K562 (cell line): ENCODE measurements at regions of chr11 and their contacts with region 1.

Region 1: DNA sequence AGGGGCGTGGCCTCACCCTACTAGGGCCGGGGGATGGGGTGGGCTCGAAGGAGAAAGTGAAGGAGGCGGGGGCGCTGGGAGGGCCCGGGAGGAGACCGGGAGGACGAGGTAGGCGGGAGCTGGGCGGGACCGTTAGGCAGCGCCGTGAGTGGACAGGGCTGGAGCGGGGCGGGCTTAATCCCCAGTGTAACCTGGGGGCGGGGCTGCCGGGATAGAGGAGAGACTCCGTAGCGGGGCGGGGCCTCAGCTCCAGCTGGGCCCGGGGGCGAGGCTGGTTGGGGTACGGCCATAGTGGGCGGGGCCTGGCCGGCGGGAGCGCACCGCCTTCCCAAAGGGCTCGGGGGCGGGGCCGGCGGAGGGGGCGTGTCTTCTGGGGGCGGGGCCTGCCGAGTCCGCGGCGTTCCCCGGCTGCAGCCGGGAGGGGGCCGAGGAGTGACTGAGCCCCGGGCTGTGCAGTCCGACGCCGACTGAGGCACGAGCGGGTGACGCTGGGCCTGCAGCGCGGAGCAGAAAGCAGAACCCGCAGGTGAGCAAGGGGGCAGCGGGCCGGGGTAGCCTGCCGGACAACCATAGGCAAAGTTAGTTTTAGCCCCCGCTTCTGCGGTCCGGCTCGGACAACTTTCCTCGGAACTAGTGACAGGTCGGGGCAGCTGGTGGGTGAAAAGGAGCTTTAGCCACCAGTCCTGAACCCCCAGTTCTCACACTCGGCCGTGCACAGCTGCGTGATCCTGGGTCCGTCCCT is at the start of gene CD82:
- DNase-seq: peak; percentile 98 to 99 (median 98)
- ATAC-seq: peak; percentile 98
- H3K4me3 ChIP-seq: peak within 1 kb of the TSS; percentile 45
- H3K27ac ChIP-seq: peak within 1 kb of the TSS; percentile 61
- H3K4me1 ChIP-seq: peaks cover 28 to 42% of the 10 kb centered on the region in 2 experiments
- H3K27me3 ChIP-seq: no peaks in the 10 kb centered on the region
- CTCF ChIP-seq: peak; percentile 14 to 46 (median 31); a peak in 3 of 6 replicates
- EP300 ChIP-seq: no peak
- POLR2A ChIP-seq: no peak; the same call in 1 of the 2 replicates
- RAD21 ChIP-seq: peak in 1 of 2 experiments; percentile 18; a peak in 1 of 4 replicates
- polyA plus RNA-seq, gene CD82: 0.27 to 0.30 TPM

Region 2: DNA sequence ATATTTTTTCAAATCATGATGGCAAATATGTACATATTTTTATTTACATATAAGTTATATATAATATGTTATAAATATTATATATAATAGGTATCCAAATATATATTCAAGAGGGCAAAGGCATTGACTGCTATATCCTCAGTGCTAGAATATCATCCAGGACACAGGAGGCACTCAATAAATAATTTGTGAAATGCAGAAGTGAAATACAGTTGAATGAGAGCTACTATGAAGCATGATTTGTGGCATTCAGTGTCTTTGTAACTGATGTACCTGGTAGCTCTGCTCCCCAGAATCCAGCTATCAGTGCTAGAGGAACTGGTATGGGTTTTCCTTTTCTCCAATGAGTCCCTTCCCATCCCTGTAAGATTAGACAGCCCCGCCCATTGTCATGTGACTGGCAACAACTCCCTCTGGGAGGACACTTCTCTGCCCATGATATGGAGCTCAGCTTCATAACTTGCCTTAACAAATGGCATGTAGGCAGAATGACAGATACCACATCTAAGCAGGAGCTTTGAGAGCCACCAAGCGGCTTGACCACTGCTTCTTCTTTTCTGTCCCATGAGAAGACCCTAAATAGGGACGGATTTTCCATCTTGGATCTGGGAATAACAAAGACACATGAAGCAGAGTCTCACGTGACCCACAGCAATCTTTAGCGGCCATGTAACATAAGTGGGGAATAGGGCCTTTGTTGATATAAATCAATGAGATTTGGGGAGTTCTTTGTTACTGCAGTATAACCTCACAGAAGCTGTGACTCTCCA is 10.2 kb before region 1 on chr11:
- CTCF ChIA-PET with region 1: no interaction called
- POLR2A ChIA-PET with region 1: no interaction called
- in situ Hi-C with region 1: no loop called
- intact Hi-C with region 1: no loop called
- DNase-seq: peak in 2 of 4 experiments; percentile 9 to 50
- ATAC-seq: peak; percentile 38
- H3K4me3 ChIP-seq: no peak overlapping the region
- H3K27ac ChIP-seq: no peak overlapping the region
- H3K4me1 ChIP-seq: peaks cover 8 to 32% of the 10 kb centered on the region in 2 experiments; a peak in 4 of 5 replicates
- H3K27me3 ChIP-seq: no peaks in the 10 kb centered on the region
- CTCF ChIP-seq: no peak
- EP300 ChIP-seq: no peak
- POLR2A ChIP-seq: no peak
- RAD21 ChIP-seq: peak in 1 of 2 experiments; percentile 11; a peak in 1 of 4 replicates

Region 3: DNA sequence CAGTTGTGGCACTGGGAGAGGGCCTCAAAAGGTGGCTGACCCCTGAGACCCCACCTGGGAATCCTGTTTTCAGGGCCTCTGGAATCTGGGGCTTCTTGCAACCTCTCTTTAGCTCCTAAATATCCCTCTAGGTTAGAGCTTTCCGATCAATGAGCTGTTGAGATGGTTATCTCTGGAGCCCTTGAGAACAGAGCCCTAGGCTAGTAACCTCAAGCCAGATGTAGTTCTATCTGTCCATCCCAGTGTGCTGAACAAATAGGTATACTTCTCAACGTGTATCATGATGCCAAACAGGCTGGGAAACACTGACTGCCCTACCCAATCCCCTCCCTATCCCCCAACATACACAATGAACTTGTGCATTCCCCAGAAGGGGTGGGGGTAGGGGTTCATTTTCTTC is 17.3 kb after region 1 on chr11:
- CTCF ChIA-PET with region 1: no interaction called
- POLR2A ChIA-PET with region 1: interaction called, 10 read pairs
- in situ Hi-C with region 1: no loop called
- intact Hi-C with region 1: no loop called
- DNase-seq: no peak
- ATAC-seq: no peak
- H3K4me3 ChIP-seq: no peak overlapping the region
- H3K27ac ChIP-seq: no peak overlapping the region
- H3K4me1 ChIP-seq: peaks cover 7% of the 10 kb centered on the region in 2 experiments
- H3K27me3 ChIP-seq: peaks cover 0 to 14% of the 10 kb centered on the region in 2 experiments; a peak in 2 of 5 replicates
- CTCF ChIP-seq: no peak
- EP300 ChIP-seq: no peak
- POLR2A ChIP-seq: no peak
- RAD21 ChIP-seq: no peak

Region 4: DNA sequence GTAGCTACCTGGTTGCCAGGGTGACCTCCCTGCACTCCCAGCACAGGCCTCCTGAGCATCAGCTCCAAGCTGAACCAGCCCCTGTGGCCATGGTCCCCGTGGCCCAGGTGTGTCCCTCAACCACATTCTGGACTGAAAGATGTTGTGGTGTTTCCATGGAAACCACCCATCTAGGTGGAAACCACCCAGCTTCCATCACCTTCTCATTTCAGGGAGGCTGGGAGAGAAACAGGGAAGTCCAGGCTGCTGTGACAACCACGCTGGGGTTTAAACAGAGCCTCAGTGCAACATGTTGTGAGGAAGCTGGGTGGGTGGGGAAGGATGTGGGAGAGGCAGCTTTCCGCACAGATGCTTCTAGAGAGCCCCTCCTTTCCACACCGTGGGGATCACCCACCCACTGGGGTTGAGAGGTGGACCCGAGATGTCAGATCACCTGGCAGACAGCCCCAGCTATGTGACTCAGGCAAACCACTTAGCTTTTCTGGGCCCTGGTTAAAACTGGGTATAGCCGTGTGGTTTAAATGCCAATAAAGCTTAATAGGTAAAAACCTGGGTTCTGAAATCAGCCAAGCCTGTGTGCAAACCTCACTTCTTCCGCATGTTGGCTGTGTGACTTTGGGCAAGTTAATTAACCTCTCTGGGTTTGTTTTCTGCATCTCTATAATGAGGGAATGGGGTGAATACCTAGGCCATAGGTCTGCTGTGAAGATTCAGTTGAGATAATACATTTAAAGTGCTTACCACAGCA is 46.5 kb after region 1 on chr11:
- CTCF ChIA-PET with region 1: no interaction called
- POLR2A ChIA-PET with region 1: interaction called, 6 read pairs
- in situ Hi-C with region 1: loop called (anchors 5 kb)
- intact Hi-C with region 1: no loop called
- DNase-seq: no peak
- ATAC-seq: no peak
- H3K4me3 ChIP-seq: no peak overlapping the region
- H3K27ac ChIP-seq: no peak overlapping the region
- H3K4me1 ChIP-seq: peaks cover 27 to 32% of the 10 kb centered on the region in 2 experiments; a peak in 4 of 5 replicates
- H3K27me3 ChIP-seq: no peaks in the 10 kb centered on the region
- CTCF ChIP-seq: no peak
- EP300 ChIP-seq: no peak
- POLR2A ChIP-seq: no peak
- RAD21 ChIP-seq: no peak

Region 5: GRCh38 chr11:44785856-44786606 is 220.6 kb after region 1 on chr11:
- CTCF ChIA-PET with region 1: no interaction called
- POLR2A ChIA-PET with region 1: no interaction called
- in situ Hi-C with region 1: no loop called
- intact Hi-C with region 1: loop called (anchors 10 kb)
- DNase-seq: peak in 2 of 4 experiments; percentile 31 to 46
- ATAC-seq: peak; percentile 48; the same call in 2 of the 3 replicates
- H3K4me3 ChIP-seq: no peak overlapping the region
- H3K27ac ChIP-seq: no peak overlapping the region
- H3K4me1 ChIP-seq: peaks cover 5 to 10% of the 10 kb centered on the region in 2 experiments; a peak in 3 of 5 replicates
- H3K27me3 ChIP-seq: peaks cover 0 to 13% of the 10 kb centered on the region in 2 experiments; a peak in 3 of 5 replicates
- CTCF ChIP-seq: peak; percentile 21 to 48 (median 24); a peak in 3 of 6 replicates
- EP300 ChIP-seq: no peak
- POLR2A ChIP-seq: no peak
- RAD21 ChIP-seq: no peak